K562 (cell line): ENCODE measurements at regions of chr5 and their contacts with region 1.

Region 1: GRCh38 chr5:76544268-76544926 is 78.8 kb downstream of the F2RL2 start:
- DNase-seq: peak; percentile 26 to 64 (median 40)
- ATAC-seq: peak; percentile 77
- H3K4me3 ChIP-seq: no peak overlapping the region
- H3K27ac ChIP-seq: no peak overlapping the region
- H3K4me1 ChIP-seq: peaks cover 7 to 47% of the 10 kb centered on the region in 2 experiments; a peak in 4 of 5 replicates
- H3K27me3 ChIP-seq: no peaks in the 10 kb centered on the region
- CTCF ChIP-seq: peak; percentile 66 to 71 (median 71)
- EP300 ChIP-seq: no peak
- POLR2A ChIP-seq: no peak
- RAD21 ChIP-seq: peak; percentile 80 to 83

Region 2: GRCh38 chr5:76479973-76480667 is 64.3 kb before region 1 on chr5:
- CTCF ChIA-PET with region 1: no interaction called
- POLR2A ChIA-PET with region 1: no interaction called
- in situ Hi-C with region 1: no loop called
- intact Hi-C with region 1: loop called (anchors 5 kb)
- DNase-seq: peak; percentile 28 to 79 (median 52)
- ATAC-seq: peak; percentile 76
- H3K4me3 ChIP-seq: no peak overlapping the region
- H3K27ac ChIP-seq: peak overlapping the region; percentile 56
- H3K4me1 ChIP-seq: peaks cover 12 to 36% of the 10 kb centered on the region in 2 experiments; a peak in 3 of 5 replicates
- H3K27me3 ChIP-seq: no peaks in the 10 kb centered on the region
- CTCF ChIP-seq: no peak
- EP300 ChIP-seq: no peak
- POLR2A ChIP-seq: no peak
- RAD21 ChIP-seq: no peak; a peak in 1 of 4 replicates

Region 3: DNA sequence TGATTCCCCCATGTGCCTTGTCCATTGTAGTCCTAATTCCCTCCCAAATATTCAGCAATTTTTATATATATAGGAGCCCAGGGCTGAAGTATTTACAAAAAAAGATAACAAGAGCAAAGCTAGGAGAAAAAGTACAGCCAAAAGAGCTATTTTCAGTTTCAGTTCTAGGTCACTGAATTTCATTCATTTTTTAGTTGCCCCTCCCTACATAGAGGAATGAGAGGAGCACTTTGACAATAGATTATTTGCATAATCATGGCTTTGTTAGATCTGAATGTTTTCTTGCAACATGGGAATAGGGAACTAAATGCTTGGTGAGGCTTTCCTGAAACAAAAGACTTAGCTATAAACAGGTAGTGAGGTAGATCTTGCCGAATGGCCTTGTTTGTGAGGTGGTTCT is 94.1 kb after region 1 on chr5:
- CTCF ChIA-PET with region 1: no interaction called
- POLR2A ChIA-PET with region 1: no interaction called
- in situ Hi-C with region 1: no loop called
- intact Hi-C with region 1: no loop called
- DNase-seq: no peak
- ATAC-seq: no peak
- H3K4me3 ChIP-seq: no peak overlapping the region
- H3K27ac ChIP-seq: no peak overlapping the region
- H3K4me1 ChIP-seq: no peaks in the 10 kb centered on the region; a peak in 1 of 5 replicates
- H3K27me3 ChIP-seq: no peaks in the 10 kb centered on the region
- CTCF ChIP-seq: no peak
- EP300 ChIP-seq: no peak
- POLR2A ChIP-seq: no peak
- RAD21 ChIP-seq: no peak

Region 4: GRCh38 chr5:76720988-76721569 is 176.7 kb after region 1 on chr5:
- CTCF ChIA-PET with region 1: no interaction called
- POLR2A ChIA-PET with region 1: no interaction called
- in situ Hi-C with region 1: no loop called
- intact Hi-C with region 1: no loop called
- DNase-seq: no peak
- ATAC-seq: no peak
- H3K4me3 ChIP-seq: no peak overlapping the region
- H3K27ac ChIP-seq: no peak overlapping the region
- H3K4me1 ChIP-seq: peaks cover 5 to 18% of the 10 kb centered on the region in 2 experiments; a peak in 4 of 5 replicates
- H3K27me3 ChIP-seq: no peaks in the 10 kb centered on the region
- CTCF ChIP-seq: no peak
- EP300 ChIP-seq: no peak
- POLR2A ChIP-seq: no peak
- RAD21 ChIP-seq: no peak